A673 (cell line): ENCODE measurements at regions of chr20 and their contacts with region 1.

Region 1: GRCh38 chr20:16761305-16761829 is 13.2 kb downstream of the OTOR start:
- DNase-seq: peak; percentile 71
- H3K4me3 ChIP-seq: no peak overlapping the region
- H3K27ac ChIP-seq: no peak overlapping the region
- H3K4me1 ChIP-seq: no peaks in the 10 kb centered on the region
- H3K27me3 ChIP-seq: peaks cover 48% of the 10 kb centered on the region
- CTCF ChIP-seq: peak; percentile 71

Region 2: DNA sequence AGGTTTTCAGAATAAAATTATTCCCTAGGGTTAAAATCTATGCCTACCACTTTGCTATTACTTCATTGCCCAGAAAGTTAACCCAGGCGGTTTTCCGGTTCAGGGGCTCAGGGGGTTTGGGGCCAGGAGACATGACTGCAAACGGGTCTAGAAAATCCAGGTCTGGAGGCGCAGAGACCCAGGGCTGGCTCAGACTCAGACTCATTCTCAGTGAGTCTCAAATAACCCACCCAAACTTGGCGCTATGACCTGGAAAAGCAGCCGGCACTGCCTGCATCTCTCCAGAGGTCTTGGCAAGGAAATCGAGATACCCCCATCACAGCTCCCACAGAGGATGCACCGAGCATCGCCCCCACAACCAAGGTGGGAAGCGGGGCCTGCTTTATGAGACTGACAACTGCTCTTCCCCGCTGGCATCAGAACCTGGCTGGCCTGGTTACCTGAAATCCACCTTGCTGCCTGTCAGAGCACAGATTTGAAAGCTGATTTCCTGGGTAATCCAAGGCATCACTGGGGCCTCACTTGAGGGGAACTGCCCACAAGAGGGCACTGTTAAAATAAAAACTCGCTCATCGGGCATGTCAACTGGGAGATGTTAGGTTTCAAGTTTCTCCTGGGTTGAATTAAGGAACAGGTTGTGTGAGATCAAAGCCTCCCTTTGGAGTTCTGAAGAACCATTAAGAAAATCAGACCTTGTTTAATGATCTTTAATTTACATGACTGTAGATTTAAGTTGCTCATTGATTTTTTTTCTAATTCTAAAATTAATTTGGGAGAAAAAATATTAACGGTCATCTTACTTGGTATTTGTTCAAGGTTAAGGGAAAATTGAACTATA is 243.2 kb before region 1 on chr20:
- CTCF ChIA-PET with region 1: interaction called, 5 read pairs
- POLR2A ChIA-PET with region 1: no interaction called
- intact Hi-C with region 1: loop called (anchors 2 kb)
- DNase-seq: peak; percentile 48
- H3K4me3 ChIP-seq: no peak overlapping the region
- H3K27ac ChIP-seq: no peak overlapping the region
- H3K4me1 ChIP-seq: no peaks in the 10 kb centered on the region
- H3K27me3 ChIP-seq: no peaks in the 10 kb centered on the region
- CTCF ChIP-seq: peak; percentile 73

Region 3: GRCh38 chr20:16701296-16701695 is 60.1 kb before region 1 on chr20:
- CTCF ChIA-PET with region 1: interaction called, 3 read pairs
- POLR2A ChIA-PET with region 1: no interaction called
- intact Hi-C with region 1: loop called (anchors 2 kb)
- DNase-seq: peak; percentile 21
- H3K4me3 ChIP-seq: no peak overlapping the region
- H3K27ac ChIP-seq: no peak overlapping the region
- H3K4me1 ChIP-seq: no peaks in the 10 kb centered on the region
- H3K27me3 ChIP-seq: peaks cover 4% of the 10 kb centered on the region
- CTCF ChIP-seq: peak; percentile 53